Panc1 (cell line): ENCODE measurements at regions of chr1 and their contacts with region 1.

Region 1: GRCh38 chr1:230917284-230918135 is 49.2 kb upstream of the C1orf198 start:
- DNase-seq: no peak
- ATAC-seq: peak; percentile 87
- H3K4me3 ChIP-seq: no peak overlapping the region
- H3K27ac ChIP-seq: no peak overlapping the region
- H3K4me1 ChIP-seq: no peaks in the 10 kb centered on the region
- H3K27me3 ChIP-seq: no peaks in the 10 kb centered on the region
- CTCF ChIP-seq: peak; percentile 84

Region 2: DNA sequence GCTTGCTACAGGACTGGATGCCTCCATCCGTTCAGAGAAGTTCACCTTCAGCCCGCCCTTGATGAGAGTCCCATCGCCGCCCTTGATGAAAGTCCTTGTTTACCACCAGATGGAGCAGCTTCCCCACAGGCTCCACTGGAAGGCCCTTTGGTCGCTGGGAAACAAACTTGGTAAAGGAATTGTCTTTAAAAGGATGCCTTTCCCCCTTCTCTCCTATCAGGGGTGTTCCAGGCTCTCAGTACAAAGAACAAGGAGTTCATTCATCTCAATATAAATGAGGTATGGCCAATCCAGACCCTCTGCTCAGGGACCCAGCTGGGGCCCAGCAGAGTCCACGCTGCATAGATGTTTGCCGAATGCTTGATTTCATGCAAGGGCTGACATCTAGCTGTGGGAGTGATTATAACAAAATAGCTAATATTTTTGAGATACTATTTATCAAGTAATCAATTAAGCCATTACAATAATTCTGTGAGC is 119.5 kb before region 1 on chr1:
- CTCF ChIA-PET with region 1: interaction called, 3 read pairs
- POLR2A ChIA-PET with region 1: no interaction called
- in situ Hi-C with region 1: no loop called
- intact Hi-C with region 1: loop called (anchors 5 kb)
- DNase-seq: peak; percentile 28
- ATAC-seq: peak; percentile 95
- H3K4me3 ChIP-seq: no peak overlapping the region
- H3K27ac ChIP-seq: no peak overlapping the region
- H3K4me1 ChIP-seq: no peaks in the 10 kb centered on the region
- H3K27me3 ChIP-seq: no peaks in the 10 kb centered on the region
- CTCF ChIP-seq: peak; percentile 88

Region 3: GRCh38 chr1:230822092-230822581 is 95.4 kb before region 1 on chr1:
- CTCF ChIA-PET with region 1: no interaction called
- POLR2A ChIA-PET with region 1: no interaction called
- in situ Hi-C with region 1: no loop called
- intact Hi-C with region 1: no loop called
- DNase-seq: no peak
- ATAC-seq: no peak
- H3K4me3 ChIP-seq: no peak overlapping the region
- H3K27ac ChIP-seq: no peak overlapping the region
- H3K4me1 ChIP-seq: peaks cover 21% of the 10 kb centered on the region
- H3K27me3 ChIP-seq: no peaks in the 10 kb centered on the region
- CTCF ChIP-seq: no peak

Region 4: GRCh38 chr1:231091831-231092301 is 174.4 kb after region 1 on chr1:
- CTCF ChIA-PET with region 1: no interaction called
- POLR2A ChIA-PET with region 1: no interaction called
- in situ Hi-C with region 1: no loop called
- intact Hi-C with region 1: loop called (anchors 10 kb)
- DNase-seq: peak; percentile 30
- ATAC-seq: peak; percentile 63; the same call in 1 of the 2 replicates
- H3K4me3 ChIP-seq: no peak overlapping the region
- H3K27ac ChIP-seq: no peak overlapping the region
- H3K4me1 ChIP-seq: no peaks in the 10 kb centered on the region
- H3K27me3 ChIP-seq: 0 out of 2 replicates have a peak, but pooled peaks cover 4% of the 10 kb centered on the region
- CTCF ChIP-seq: peak; percentile 79

Region 5: DNA sequence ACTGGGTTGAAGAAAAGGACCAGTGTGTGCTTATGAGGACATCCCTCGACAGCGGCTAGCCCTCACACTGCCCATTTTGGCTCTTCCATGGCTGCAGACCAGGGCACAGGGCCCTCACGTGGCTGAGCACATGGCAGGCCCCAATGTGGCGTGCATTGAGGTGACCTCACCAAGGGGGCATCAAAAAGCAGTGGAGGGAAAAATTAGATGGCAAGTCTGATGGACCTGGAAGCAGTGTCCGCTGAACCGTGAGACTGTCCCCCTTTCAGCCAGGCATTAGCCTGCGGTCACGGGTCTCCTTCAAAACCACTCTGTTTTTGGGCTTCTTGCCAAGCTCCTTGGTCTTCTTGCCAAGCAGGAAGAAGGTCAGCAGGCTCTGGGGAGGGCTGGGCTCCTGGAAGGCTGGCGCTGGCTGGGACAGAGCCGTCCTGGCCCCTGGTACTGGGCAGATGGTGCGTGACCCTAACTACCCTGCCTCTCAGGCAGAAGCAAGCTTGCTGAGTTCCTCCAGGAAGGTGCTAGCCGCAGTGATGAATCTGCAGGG is 275.2 kb after region 1 on chr1:
- CTCF ChIA-PET with region 1: no interaction called
- POLR2A ChIA-PET with region 1: no interaction called
- in situ Hi-C with region 1: no loop called
- intact Hi-C with region 1: no loop called
- DNase-seq: no peak
- ATAC-seq: 0 out of 2 replicates have a peak, but pooled peaks have one; percentile 10
- H3K4me3 ChIP-seq: no peak overlapping the region
- H3K27ac ChIP-seq: no peak overlapping the region
- H3K4me1 ChIP-seq: no peaks in the 10 kb centered on the region
- H3K27me3 ChIP-seq: peaks cover 3% of the 10 kb centered on the region; the same call in 1 of the 2 replicates
- CTCF ChIP-seq: no peak

Region 6: DNA sequence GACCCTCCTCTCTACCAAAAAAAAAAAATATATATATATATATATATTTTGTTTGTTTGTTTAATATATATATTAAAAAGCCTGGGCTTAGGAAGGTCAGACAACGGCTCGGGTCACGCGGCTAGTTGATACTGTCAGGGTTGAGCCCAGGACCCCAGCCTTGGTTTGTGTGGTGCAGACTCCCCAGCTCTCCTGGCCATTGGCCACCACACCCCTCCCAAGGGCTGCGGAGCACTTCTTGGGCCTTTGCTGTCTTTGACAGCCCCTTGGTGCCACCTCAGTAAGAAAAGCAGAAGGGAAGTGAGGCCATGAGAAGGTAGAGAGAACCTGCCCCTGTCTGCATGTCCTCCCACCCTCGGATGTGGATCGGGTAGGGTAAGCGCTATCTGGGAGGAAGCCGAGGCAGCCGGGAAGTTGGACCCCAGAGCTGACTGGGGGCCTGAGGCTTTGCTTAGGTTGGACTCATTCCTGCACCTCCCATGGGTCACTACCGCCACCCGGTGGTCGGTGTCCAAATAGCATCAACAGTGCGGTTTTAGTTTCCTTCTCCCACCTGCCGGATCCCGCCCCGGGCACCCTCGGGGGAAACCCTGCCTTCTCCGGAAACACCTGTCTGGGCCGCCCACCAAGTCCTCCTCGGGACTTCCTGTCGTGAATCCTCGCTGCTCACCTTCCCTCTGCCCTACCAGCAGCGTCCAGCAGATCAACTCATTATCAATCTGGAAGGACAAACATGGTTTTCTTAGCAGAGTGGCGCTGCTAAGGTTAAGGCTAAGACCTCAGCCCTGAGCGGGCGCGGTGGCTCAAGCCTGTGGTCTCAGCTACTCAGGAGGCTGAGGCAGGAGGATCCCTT is 293.7 kb after region 1 on chr1:
- CTCF ChIA-PET with region 1: no interaction called
- POLR2A ChIA-PET with region 1: no interaction called
- in situ Hi-C with region 1: no loop called
- intact Hi-C with region 1: loop called (anchors 5 kb)
- DNase-seq: peak; percentile 59
- ATAC-seq: peak; percentile 94
- H3K4me3 ChIP-seq: peak overlapping the region; percentile 56 to 69
- H3K27ac ChIP-seq: no peak overlapping the region; the same call in 1 of the 2 replicates
- H3K4me1 ChIP-seq: 0 out of 2 replicates have a peak, but pooled peaks cover 3% of the 10 kb centered on the region
- H3K27me3 ChIP-seq: no peaks in the 10 kb centered on the region
- CTCF ChIP-seq: peak; percentile 94